ENCODE measurements at regions of chr5 and their contacts with region 1.

Region 1: GRCh38 chr5:97231025-97231636 is 48.1 kb upstream of the RIOK2 start:
- DNase-seq: peak; percentile 31 to 73
- ATAC-seq: peak; percentile 80 to 83; a peak in 5 of 6 replicates
- H3K4me3 ChIP-seq: no peak overlapping the region
- H3K27ac ChIP-seq: no peak overlapping the region
- H3K4me1 ChIP-seq: no peaks in the 10 kb centered on the region
- CTCF ChIP-seq: peak; percentile 89
- EP300 ChIP-seq: no peak
- POLR2A ChIP-seq: no peak
- RAD21 ChIP-seq: peak; percentile 82

Region 2: DNA sequence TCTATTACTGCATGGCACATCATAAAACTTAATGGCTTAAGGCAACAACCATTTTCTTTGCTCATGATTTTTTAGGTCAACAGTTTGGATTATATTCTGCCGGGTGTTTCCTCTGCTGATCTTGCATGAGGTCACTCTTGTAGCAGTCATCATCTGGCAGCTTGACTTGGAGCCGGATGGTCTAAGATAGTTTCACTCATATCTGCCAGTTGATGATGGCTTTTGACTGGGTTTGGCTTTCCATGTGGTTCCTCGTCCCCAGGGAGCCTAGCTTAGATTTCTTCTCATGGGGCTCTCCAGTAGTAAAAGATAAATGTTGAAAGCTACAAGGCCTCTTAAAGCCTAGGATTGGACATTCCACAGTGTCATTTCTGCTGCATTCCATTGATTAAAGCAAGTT is 267.9 kb before region 1 on chr5:
- CTCF ChIA-PET with region 1: no interaction called
- POLR2A ChIA-PET with region 1: no interaction called
- DNase-seq: no peak
- ATAC-seq: peak in 1 of 2 experiments; percentile 36; a peak in 1 of 6 replicates
- H3K4me3 ChIP-seq: no peak overlapping the region
- H3K27ac ChIP-seq: no peak overlapping the region
- H3K4me1 ChIP-seq: peaks cover 8% of the 10 kb centered on the region
- CTCF ChIP-seq: no peak
- EP300 ChIP-seq: no peak
- POLR2A ChIP-seq: no peak
- RAD21 ChIP-seq: no peak

Region 3: DNA sequence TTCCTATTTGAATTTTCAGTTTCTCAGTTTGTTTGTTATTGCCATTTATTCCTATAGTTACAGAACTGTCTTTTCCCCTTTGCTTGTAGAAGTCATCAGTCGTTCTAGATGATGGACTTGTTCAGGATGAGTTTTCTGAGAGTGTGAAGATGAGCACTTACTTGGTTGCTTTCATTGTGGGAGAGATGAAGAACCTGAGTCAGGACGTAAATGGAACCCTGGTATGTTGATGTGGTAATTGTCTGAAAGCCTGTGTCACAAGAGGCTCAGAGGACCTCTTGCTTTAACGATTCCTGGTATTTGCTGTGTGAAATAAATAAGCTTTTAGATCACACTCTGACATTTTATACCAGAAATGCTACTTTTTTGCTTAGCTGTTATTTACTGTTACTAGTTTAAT is 244.7 kb before region 1 on chr5:
- CTCF ChIA-PET with region 1: no interaction called
- POLR2A ChIA-PET with region 1: no interaction called
- DNase-seq: no peak
- ATAC-seq: no peak
- H3K4me3 ChIP-seq: no peak overlapping the region
- H3K27ac ChIP-seq: no peak overlapping the region
- H3K4me1 ChIP-seq: peaks cover 7% of the 10 kb centered on the region; the same call in 1 of the 3 replicates
- CTCF ChIP-seq: no peak
- EP300 ChIP-seq: no peak
- POLR2A ChIP-seq: no peak
- RAD21 ChIP-seq: no peak

Region 4: DNA sequence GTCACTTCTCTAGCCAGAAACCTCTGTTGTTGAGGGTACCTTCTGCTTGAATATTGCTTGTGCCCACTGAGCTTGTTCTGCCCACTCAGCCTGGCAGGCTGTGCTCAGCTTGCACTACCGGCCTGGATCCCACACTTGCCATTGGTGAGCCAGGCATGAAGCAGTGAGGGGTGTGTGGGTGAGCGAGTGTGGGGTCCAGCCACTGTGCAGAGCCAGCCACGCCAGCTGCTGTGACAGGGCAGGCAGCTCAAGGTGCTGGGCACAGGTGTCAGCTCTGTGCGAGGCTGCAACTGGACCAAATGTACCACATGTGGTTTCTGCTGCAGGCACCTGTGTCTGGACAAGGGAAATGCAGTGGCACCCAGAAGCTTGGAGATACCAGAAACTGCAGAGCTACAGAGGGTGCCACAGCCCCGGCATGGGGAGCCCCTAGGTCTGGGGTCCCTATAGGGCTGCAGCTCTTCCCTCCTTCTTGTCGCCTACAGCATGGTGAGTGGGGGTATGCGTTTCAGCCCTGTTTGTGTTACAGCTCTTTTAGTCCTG is 257.1 kb after region 1 on chr5:
- CTCF ChIA-PET with region 1: no interaction called
- POLR2A ChIA-PET with region 1: no interaction called
- DNase-seq: no peak
- ATAC-seq: no peak
- H3K4me3 ChIP-seq: no peak overlapping the region
- H3K27ac ChIP-seq: no peak overlapping the region
- H3K4me1 ChIP-seq: no peaks in the 10 kb centered on the region
- CTCF ChIP-seq: no peak
- EP300 ChIP-seq: no peak
- POLR2A ChIP-seq: no peak
- RAD21 ChIP-seq: no peak

Region 5: GRCh38 chr5:97534166-97534565 is 303.0 kb after region 1 on chr5:
- CTCF ChIA-PET with region 1: interaction called, 21 read pairs
- POLR2A ChIA-PET with region 1: no interaction called
- DNase-seq: peak; percentile 18 to 56
- ATAC-seq: peak; percentile 81 to 87; a peak in 5 of 6 replicates
- H3K4me3 ChIP-seq: no peak overlapping the region
- H3K27ac ChIP-seq: no peak overlapping the region
- H3K4me1 ChIP-seq: no peaks in the 10 kb centered on the region
- CTCF ChIP-seq: peak; percentile 44; the same call in 2 of the 3 replicates
- EP300 ChIP-seq: no peak
- POLR2A ChIP-seq: no peak
- RAD21 ChIP-seq: peak; percentile 32 to 53; a peak in 4 of 5 replicates

Measured in A549 (cell line).